ENCODE measurements at regions of chr6 and their contacts with region 1.

Region 1: DNA sequence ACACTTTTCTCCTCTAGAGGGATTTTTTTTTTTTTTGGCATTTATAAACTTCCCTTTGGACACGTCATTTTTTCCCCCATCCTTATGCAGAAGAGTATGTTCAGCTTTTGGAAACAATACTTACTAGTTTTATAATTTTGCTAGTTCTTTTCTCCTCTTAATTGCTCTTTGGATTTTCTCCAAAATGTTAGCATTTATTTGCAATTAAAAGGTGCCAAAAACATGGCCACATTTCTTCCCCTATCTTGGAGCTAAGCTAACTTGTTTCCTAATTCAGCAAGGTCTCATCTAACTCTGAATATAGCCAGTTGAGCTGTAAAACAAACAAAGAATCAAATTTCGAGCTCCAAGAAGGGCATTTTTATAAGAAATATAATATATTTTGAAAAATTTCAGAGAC is 39.2 kb upstream of the RNF182 start:
- DNase-seq: no peak
- ATAC-seq: no peak
- H3K4me3 Mint-ChIP-seq: no peak overlapping the region
- H3K27ac Mint-ChIP-seq: no peak overlapping the region
- H3K4me1 Mint-ChIP-seq: no peaks in the 10 kb centered on the region
- H3K27me3 Mint-ChIP-seq: peaks cover 8% of the 10 kb centered on the region

Region 2: GRCh38 chr6:13873285-13874190 is 12.1 kb before region 1 on chr6:
- CTCF ChIA-PET with region 1: interaction called, 13 read pairs
- DNase-seq: peak; percentile 77
- ATAC-seq: peak; percentile 95
- H3K4me3 Mint-ChIP-seq: peak overlapping the region; percentile 67
- H3K27ac Mint-ChIP-seq: peak overlapping the region; percentile 22
- H3K4me1 Mint-ChIP-seq: peaks cover 8% of the 10 kb centered on the region
- H3K27me3 Mint-ChIP-seq: peaks cover 18% of the 10 kb centered on the region

Measured in activated CD8-positive, alpha-beta memory T cell treated with anti-CD3 and anti-CD28 coated beads, Interleukin-2, amount 10 ng/mL, durations not matched to agents 7 days and 5 days (primary cell).